GM12878 (cell line): ENCODE measurements at regions of chr1 and their contacts with region 1.

Region 1: DNA sequence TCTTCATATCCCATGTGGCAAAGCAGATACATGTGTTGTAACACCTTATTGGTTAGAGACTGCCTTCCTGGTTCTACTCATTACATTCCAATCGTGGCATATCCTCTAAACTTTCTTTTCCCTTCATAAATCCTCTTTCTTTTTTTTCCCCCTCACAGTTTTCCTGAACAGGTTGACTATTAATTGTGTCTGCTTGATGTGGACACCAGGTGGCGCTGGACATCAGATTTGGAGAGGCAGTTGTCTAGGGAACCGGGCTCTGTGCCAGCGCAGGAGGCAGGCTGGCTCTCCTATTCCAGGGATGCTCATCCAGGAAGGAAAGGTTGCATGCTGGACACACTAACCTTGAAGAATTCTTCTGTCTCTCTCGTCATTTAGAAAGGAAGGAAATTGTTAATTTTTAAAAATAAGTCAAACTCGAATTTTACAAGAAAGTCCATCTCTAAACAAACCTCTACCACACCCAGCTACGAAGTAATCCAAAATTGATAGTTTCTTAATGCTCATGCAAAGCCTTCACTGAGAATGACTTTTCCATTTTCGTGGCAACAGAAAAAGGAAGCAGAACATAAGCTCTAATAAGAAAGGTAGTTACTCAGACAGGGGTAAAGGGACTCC is 59.4 kb upstream of the ASB17 start:
- DNase-seq: no peak
- ATAC-seq: peak; percentile 86
- H3K4me3 ChIP-seq: no peak overlapping the region
- H3K27ac ChIP-seq: no peak overlapping the region
- H3K4me1 ChIP-seq: no peaks in the 10 kb centered on the region
- H3K27me3 ChIP-seq: no peaks in the 10 kb centered on the region
- CTCF ChIP-seq: peak; percentile 75 to 78 (median 77)
- EP300 ChIP-seq: no peak
- POLR2A ChIP-seq: no peak
- RAD21 ChIP-seq: peak; percentile 72

Region 2: GRCh38 chr1:75672528-75673393 is 318.8 kb before region 1 on chr1:
- CTCF ChIA-PET with region 1: no interaction called
- POLR2A ChIA-PET with region 1: no interaction called
- RAD21 ChIA-PET with region 1: no interaction called
- SMC1A ChIA-PET with region 1: no interaction called
- in situ Hi-C with region 1: no loop called
- intact Hi-C with region 1: no loop called
- DNase-seq: no peak
- ATAC-seq: no peak; the same call in 2 of the 3 replicates
- H3K4me3 ChIP-seq: no peak overlapping the region
- H3K27ac ChIP-seq: no peak overlapping the region
- H3K4me1 ChIP-seq: no peaks in the 10 kb centered on the region
- H3K27me3 ChIP-seq: no peaks in the 10 kb centered on the region
- CTCF ChIP-seq: no peak
- EP300 ChIP-seq: no peak
- POLR2A ChIP-seq: no peak
- RAD21 ChIP-seq: no peak

Region 3: DNA sequence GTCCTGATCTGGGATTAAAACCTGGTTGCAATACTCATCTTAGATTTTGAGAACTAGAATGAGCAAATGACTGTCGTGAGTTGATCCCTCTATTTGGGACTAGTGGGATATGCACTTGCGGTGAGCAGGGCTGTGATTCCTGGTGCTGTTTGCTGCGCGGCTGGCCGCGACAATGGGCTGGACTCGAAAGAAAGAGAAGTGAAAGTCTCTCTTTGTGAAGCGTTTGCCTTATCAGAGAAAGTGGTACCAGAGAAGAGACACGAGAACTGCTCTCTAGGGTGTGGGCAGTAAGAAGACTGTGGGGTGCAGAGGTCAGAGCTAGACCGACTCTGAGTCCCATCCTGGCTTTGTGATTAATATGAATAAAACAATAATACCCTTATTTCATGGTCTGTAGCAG is 91.6 kb after region 1 on chr1:
- CTCF ChIA-PET with region 1: no interaction called
- POLR2A ChIA-PET with region 1: no interaction called
- RAD21 ChIA-PET with region 1: no interaction called
- SMC1A ChIA-PET with region 1: interaction called, 3 read pairs
- in situ Hi-C with region 1: no loop called
- intact Hi-C with region 1: loop called (anchors 5 kb)
- DNase-seq: no peak
- ATAC-seq: peak; percentile 94
- H3K4me3 ChIP-seq: no peak overlapping the region
- H3K27ac ChIP-seq: no peak overlapping the region
- H3K4me1 ChIP-seq: no peaks in the 10 kb centered on the region
- H3K27me3 ChIP-seq: no peaks in the 10 kb centered on the region
- CTCF ChIP-seq: no peak
- EP300 ChIP-seq: no peak
- POLR2A ChIP-seq: no peak
- RAD21 ChIP-seq: no peak